Dendritic cell treated with granulocyte-macrophage colony-stimulating factor and Interleukin-4, amounts not matched to agents 40 ng/mL and 50 ng/mL, for 4 days (primary cell): ENCODE measurements at regions of chr9 and their contacts with region 1.

Region 1: DNA sequence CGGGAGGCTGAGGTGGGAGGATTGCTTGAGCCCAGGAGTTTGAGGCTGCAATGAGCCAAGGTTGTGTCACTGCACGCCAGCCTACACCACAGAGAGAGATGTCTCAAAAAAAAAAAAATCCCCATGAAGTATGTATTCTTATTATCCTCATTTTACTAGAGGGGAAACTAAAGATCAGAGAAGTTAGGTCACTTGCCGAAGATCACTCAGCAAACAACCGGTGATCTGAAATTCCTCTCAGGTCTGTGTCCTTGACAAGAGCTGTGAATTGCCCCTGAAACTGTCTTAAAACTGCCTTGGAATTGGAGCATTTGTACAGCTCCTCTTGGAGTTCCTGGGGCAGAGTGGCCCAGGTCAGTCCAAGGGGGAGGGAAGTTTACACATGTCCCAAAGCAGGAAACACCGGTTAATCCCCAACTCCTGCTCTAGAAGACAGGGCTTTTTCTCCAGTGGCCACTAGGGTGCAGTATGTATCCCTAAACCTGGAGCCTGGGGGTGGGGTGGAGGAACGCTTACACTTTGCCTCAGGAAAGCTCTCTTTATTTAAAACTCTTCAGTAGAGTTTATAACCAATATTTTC is 27.6 kb downstream of the AQP7 start:
- H3K4me3 Mint-ChIP-seq: no peak overlapping the region
- H3K27ac Mint-ChIP-seq: peak overlapping the region; percentile 23
- H3K4me1 Mint-ChIP-seq: peaks cover 14% of the 10 kb centered on the region
- H3K27me3 Mint-ChIP-seq: no peaks in the 10 kb centered on the region

Region 2: DNA sequence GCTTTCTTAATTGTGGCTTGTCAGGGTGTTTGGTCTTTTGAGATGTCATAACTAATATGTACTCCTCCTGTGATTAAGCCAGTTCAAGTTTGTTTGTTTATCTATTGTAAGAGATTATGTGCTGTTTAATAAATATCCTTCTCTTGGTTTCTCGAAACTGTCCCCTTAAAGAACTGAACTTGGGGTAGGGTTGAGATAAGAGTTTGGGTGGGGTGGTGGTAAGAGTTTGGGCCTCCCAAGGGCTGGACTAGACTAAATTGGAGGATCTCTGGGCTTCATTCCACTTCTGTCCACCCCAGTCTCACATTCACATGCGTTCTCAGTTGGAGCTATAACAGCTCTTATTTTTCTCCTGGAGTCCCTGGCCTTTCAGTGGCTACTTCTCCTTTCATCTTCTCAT is 10.6 kb before region 1 on chr9:
- intact Hi-C with region 1: no loop called
- H3K4me3 Mint-ChIP-seq: no peak overlapping the region
- H3K27ac Mint-ChIP-seq: no peak overlapping the region
- H3K4me1 Mint-ChIP-seq: no peaks in the 10 kb centered on the region
- H3K27me3 Mint-ChIP-seq: no peaks in the 10 kb centered on the region

Region 3: DNA sequence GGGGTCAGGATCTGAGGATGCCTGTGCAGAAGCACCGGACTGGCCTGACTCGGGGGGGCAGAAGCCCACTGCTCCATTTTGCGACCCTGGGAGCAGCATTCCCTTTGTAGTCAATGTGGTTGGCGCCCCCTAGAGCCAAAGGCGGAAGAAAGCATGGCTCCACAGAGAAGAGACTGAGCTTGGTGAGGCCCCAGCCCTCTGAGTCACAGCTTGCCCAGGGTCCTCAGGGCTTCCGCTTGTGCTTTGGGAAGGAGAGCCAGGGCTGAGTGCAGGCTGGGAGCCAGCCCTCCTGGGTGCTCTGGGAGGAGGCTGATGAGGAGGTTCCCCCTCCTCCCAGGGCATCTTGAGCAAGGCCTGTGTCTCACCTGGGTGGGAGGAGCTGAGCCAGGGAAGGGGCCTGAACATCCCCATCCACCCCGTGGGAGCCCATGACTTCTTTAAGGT is 78.1 kb after region 1 on chr9:
- intact Hi-C with region 1: no loop called
- H3K4me3 Mint-ChIP-seq: no peak overlapping the region
- H3K27ac Mint-ChIP-seq: peak overlapping the region; percentile 37
- H3K4me1 Mint-ChIP-seq: peaks cover 28% of the 10 kb centered on the region
- H3K27me3 Mint-ChIP-seq: peaks cover 10% of the 10 kb centered on the region

Region 4: DNA sequence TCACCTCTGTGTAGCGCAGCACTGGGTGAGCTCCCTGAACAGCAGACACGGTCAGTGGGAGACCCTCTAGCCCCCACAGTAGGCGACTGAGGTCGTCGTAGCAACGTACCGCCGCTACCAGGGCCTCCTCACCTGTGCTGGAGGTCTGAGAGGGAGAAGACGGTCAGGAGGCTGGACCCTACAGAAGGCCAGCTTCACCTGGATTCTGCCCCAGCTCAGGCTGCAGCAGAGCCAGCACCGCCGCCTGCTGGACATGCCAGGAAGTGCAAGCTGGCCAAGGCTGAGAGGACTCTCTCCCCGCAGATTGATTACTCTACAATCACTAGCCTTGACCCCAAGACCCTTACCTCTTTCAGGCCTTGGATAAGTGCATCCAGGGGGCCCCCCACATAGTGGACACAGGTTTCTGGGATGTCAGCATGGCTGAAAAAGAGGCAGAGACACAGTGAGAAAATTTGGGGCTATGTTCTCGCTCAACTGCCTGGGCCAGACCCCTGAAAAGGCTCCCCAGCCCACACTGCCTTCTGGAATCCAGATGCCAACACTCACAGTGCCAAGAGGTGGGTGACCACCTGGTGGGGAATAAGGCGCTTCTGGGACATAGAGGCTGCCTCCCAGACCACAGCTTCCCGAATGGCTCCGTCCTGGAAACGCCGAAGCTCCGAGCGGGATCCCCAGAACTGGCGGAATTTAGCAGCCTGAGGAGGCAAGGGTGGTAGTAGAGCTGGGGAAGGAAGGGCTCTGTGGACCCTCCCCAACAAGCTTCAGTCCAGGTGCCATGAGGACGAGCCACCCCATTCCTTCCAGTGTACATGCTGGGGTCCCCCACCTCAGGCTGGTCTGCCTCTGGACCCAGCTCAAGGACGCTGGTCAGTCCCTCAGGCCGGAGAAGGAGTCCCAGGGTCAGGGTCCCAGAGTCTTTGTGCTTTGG is 92.1 kb after region 1 on chr9:
- intact Hi-C with region 1: loop called (anchors 10 kb)
- H3K4me3 Mint-ChIP-seq: no peak overlapping the region
- H3K27ac Mint-ChIP-seq: no peak overlapping the region
- H3K4me1 Mint-ChIP-seq: peaks cover 8% of the 10 kb centered on the region
- H3K27me3 Mint-ChIP-seq: no peaks in the 10 kb centered on the region

Region 5: DNA sequence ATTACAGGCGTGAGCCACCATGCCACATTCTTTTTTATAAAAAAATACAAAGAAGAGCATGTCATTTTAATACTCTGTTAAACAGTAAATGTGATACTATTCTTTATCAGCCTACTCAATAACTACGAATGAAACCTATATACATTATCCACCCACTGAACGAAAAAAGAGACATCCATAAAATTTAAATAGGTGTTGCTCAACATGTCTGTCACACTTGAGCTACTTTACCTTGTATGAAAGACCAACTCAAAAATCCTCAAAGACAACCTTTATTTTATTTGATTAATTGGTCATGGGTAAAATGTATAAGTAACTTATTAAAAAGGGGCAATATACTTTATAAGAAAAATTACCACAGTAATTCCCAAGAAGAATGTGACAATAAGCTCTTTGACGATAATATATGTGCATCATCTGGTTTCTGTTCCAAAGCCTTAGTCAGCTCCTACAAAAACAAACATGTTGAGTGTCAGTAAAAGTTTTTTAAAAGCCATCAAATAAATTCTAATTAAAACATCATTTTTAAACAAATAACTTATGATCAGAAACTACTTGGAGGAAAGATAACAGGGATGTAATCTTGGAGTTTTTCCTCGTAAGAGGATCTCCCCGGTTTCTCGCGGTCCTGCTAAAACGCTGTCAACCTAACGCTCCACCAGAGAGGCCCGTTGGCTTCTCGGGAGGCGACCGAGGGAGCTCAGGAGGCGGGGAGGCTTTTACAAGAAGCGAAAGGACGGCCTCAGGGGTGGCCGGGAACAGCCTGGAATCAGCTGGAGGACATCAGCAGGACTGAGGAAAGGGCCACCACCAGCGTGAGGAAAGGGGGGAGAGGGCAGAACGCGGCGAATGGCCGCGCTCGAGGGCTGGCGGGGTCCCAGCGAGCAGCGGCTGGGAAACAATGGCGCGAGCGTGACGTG is 135.8 kb after region 1 on chr9:
- intact Hi-C with region 1: loop called (anchors 10 kb)
- H3K4me3 Mint-ChIP-seq: peak overlapping the region; percentile 99
- H3K27ac Mint-ChIP-seq: peak overlapping the region; percentile 97
- H3K4me1 Mint-ChIP-seq: no peaks in the 10 kb centered on the region
- H3K27me3 Mint-ChIP-seq: peaks cover 2% of the 10 kb centered on the region